Breast epithelium (tissue), 4 donors: ENCODE measurements at regions of chr2 and their contacts with region 1.

Region 1: GRCh38 chr2:199870581-199870980 is 19.6 kb upstream of the FTCDNL1 start:
- DNase-seq: no peak
- H3K4me3 ChIP-seq: no peak overlapping the region
- H3K27ac ChIP-seq: no peak overlapping the region
- H3K4me1 ChIP-seq: no peaks in the 10 kb centered on the region
- H3K27me3 ChIP-seq: no peaks in the 10 kb centered on the region
- CTCF ChIP-seq: no peak
- POLR2A ChIP-seq: no peak

Region 2: GRCh38 chr2:198394208-198394607 is 1476.4 kb before region 1 on chr2:
- intact Hi-C with region 1: loop called (anchors 5 kb)
- DNase-seq: no peak
- H3K4me3 ChIP-seq: no peak overlapping the region
- H3K27ac ChIP-seq: no peak overlapping the region
- H3K4me1 ChIP-seq: no peaks in the 10 kb centered on the region
- H3K27me3 ChIP-seq: no peaks in the 10 kb centered on the region
- CTCF ChIP-seq: no peak
- POLR2A ChIP-seq: no peak

Region 3: DNA sequence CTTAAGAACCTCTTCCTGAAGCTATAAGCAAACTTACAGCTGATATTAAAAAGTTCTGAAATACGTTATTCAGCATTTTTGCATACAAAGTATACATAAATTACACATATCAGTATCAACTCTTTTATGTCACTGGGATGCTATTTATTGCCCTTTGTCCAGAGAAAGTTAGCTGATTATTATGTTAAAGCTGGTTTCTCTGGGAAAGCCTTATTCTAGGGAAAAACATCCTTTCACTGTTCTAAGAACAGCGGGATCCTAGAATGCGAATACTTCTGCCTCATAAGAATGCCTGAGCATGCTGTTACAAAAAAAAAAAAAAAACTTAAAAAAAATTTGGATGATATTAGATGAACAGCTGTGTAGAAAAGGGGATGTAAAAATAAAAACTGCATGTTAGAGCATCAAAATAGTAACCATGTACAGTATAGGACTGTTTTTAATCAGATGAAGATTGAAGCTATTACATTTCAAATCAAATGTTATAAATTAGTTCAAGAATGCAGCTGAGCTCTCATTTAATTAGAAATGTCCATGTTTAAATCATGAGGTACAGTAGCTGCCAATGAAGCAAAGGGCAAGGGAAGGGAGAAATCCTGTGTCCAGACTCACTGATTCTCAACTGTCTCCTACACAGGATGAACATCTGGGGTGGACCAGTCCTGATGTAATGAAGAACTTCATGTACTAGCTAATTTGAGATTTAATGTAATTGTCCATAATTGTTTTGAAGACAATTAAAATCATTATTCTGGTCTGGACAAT is 27.8 kb before region 1 on chr2:
- intact Hi-C with region 1: no loop called
- DNase-seq: no peak
- H3K4me3 ChIP-seq: no peak overlapping the region
- H3K27ac ChIP-seq: no peak overlapping the region
- H3K4me1 ChIP-seq: no peaks in the 10 kb centered on the region
- H3K27me3 ChIP-seq: no peaks in the 10 kb centered on the region
- CTCF ChIP-seq: no peak
- POLR2A ChIP-seq: no peak

Region 4: DNA sequence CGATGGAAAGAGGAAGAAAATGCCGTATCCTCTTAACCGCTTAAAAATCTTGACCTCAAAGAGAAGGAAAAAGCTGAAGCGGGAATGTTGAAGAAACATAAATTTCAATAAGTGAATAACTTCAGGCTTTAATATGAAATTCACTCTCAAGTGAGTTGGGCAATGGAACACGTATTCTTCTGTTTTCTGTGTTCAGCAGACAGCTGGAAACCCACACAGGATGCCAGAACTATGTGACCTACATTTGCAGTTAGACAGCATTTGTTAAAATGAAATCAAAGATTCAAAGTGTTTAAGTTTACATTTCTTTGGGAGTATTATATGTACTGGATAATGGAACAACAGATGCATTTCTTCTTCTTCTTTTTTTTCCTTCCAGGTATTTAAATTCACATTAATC is 355.4 kb after region 1 on chr2:
- intact Hi-C with region 1: no loop called
- DNase-seq: no peak
- H3K4me3 ChIP-seq: no peak overlapping the region
- H3K27ac ChIP-seq: peak overlapping the region in 1 of 2 donors; percentile 34
- H3K4me1 ChIP-seq: peaks cover 0 to 2% of the 10 kb centered on the region in 2 donors
- H3K27me3 ChIP-seq: no peaks in the 10 kb centered on the region
- CTCF ChIP-seq: no peak
- POLR2A ChIP-seq: no peak